Transverse colon (tissue), 4 donors: ENCODE measurements at regions of chr12 and their contacts with region 1.

Region 1: GRCh38 chr12:92570056-92570753 is 132.6 kb upstream of the PLEKHG7 start:
- DNase-seq: peak; percentile 64
- H3K4me3 ChIP-seq: no peak overlapping the region
- H3K27ac ChIP-seq: no peak overlapping the region
- H3K4me1 ChIP-seq: peaks cover 0 to 20% (median 5%) of the 10 kb centered on the region in 4 donors
- H3K27me3 ChIP-seq: no peaks in the 10 kb centered on the region
- CTCF ChIP-seq: peak; percentile 76 to 94 (median 81)
- EP300 ChIP-seq: no peak
- POLR2A ChIP-seq: no peak

Region 2: DNA sequence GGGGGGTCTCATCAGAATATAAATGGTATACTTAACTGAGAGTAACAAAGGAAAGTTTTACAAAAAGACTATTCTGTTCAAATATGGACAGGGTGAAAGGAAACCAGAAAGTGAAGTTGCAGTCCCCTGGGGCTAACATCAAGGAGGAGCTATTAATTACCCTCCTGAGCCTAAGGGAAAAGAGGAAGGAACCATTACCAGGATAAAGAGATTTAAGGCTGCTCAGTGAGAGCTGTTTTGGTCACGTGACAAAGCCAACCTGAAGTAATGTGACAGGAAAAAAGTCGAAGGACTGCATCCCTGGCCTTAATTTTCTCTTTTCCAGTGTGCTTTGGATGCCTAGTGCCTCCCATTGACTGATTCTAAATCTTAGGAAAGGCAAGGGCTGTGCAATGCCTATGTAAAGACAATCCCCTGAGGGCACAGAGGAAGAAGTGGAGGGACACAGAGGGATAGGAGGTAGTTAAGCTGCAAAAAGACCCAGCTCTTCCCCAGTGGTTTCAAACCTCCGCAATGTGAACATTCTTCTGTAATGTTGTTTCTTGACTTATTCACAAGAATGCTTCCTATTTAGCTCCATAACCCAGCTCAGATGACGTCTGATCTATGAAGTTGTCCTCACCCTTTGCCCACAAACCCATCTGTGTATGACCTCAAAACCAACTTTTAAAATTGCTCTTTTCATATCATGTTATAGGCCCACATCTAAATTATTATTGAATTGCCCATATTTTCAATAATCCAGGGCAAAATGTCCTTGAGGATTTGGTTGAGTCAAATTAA is 1199.9 kb before region 1 on chr12:
- in situ Hi-C with region 1: loop called in 1 of 4 experiments (anchors 10 kb)
- intact Hi-C with region 1: no loop called
- DNase-seq: no peak
- H3K4me3 ChIP-seq: no peak overlapping the region
- H3K27ac ChIP-seq: no peak overlapping the region
- H3K4me1 ChIP-seq: no peaks in the 10 kb centered on the region
- H3K27me3 ChIP-seq: no peaks in the 10 kb centered on the region
- CTCF ChIP-seq: no peak
- EP300 ChIP-seq: no peak
- POLR2A ChIP-seq: no peak

Region 3: DNA sequence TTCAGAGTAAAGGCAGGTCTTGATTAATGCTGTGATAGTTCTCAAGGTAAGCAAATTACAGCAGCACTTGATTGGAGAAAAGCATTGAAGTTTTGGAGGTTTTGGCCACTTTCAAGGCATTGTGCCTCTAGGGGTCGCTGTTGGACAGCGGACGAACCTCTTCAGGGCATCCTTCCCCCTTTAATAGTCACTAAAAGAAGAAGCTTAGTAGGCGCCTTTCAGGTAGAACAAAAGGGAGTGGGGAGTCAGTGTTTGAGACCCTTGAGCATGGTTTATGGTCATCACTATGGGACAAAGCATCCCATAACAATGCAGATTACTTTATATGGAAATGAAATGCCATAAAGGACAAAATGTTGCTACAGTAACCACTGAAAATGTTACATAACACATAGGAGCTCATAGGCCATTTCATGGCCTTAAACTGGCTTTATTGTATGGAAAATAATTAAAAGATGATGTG is 1188.1 kb before region 1 on chr12:
- in situ Hi-C with region 1: loop called in 3 of 4 experiments (anchors 5 to 10 kb)
- intact Hi-C with region 1: loop called (anchors 5 kb)
- DNase-seq: peak; percentile 86
- H3K4me3 ChIP-seq: peak overlapping the region; percentile 7 to 40 (median 22)
- H3K27ac ChIP-seq: peak overlapping the region; percentile 53 to 71 (median 60)
- H3K4me1 ChIP-seq: peaks cover 0 to 27% (median 1%) of the 10 kb centered on the region in 4 donors
- H3K27me3 ChIP-seq: no peaks in the 10 kb centered on the region
- CTCF ChIP-seq: peak; percentile 83 to 94 (median 87)
- EP300 ChIP-seq: no peak
- POLR2A ChIP-seq: no peak

Region 4: DNA sequence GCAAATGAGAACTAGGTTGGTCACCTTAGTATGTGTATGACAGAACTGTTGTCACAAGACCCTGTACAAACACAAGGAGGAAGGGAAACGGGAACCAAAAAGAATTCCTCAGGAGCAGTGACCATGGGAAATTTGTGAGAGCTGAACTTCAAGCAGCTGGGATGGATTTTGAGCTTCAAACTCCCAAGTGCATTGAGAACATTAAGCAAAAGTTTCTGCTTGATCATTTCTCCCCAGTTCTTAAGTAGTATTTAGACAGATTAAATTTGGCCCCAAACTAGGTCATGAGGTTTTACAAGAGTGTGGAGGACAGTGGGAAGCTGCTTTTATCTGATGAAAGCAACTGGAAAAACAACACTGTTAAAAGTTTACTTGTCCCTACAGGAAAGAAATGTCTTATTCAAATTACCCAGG is 1181.6 kb before region 1 on chr12:
- in situ Hi-C with region 1: loop called in 2 of 4 experiments (anchors 5 to 10 kb)
- intact Hi-C with region 1: loop called (anchors 5 kb)
- DNase-seq: no peak
- H3K4me3 ChIP-seq: no peak overlapping the region
- H3K27ac ChIP-seq: no peak overlapping the region
- H3K4me1 ChIP-seq: peaks cover 0 to 7% (median 0%) of the 10 kb centered on the region in 4 donors
- H3K27me3 ChIP-seq: no peaks in the 10 kb centered on the region
- CTCF ChIP-seq: no peak
- EP300 ChIP-seq: no peak
- POLR2A ChIP-seq: no peak

Region 5: GRCh38 chr12:92145731-92146496 is 424.3 kb before region 1 on chr12 and contains the start of gene BTG1:
- in situ Hi-C with region 1: loop called (anchors 5 to 25 kb)
- intact Hi-C with region 1: loop called (anchors 10 kb)
- DNase-seq: peak; percentile 100
- H3K4me3 ChIP-seq: peak within 1 kb of the TSS; percentile 74 to 98 (median 96)
- H3K27ac ChIP-seq: peak within 1 kb of the TSS; percentile 98 to 100 (median 99)
- H3K4me1 ChIP-seq: peaks cover 0 to 30% (median 2%) of the 10 kb centered on the region in 4 donors
- H3K27me3 ChIP-seq: no peaks in the 10 kb centered on the region
- CTCF ChIP-seq: no peak
- EP300 ChIP-seq: no peak
- POLR2A ChIP-seq: peak; percentile 99
- total RNA-seq, gene BTG1: 28.3 to 111 (median 78.1) TPM

Region 6: DNA sequence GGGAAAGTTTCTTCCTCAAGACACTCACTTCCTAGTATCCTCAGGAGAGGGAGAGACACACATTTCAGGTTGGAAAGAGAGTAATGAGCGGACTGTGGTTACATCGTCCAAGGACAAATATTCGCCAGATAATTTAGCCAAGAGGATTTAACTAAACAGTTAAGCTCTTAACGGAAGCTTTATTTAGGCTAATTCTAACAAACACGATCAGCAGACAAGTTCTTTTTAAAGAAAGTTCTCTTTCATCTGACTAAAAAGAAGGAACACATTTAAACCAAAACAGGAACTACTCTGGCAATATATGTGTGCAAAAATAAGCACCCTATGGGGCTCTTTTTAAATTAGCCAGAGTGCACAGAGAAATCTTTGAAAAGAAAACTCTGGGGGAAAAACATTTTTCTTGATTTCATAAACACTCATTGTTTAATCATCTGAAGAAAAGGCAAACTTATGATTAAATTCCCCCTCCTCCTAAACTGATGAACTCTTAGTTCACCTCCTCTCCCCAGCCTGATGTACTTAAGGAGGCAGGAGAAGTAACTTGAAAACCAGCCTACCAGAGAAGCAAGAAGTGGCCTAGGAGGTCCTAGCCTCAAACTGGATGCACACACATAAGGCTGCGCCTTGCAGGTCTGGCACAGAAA is 411.3 kb before region 1 on chr12:
- in situ Hi-C with region 1: no loop called
- intact Hi-C with region 1: loop called (anchors 10 kb)
- DNase-seq: no peak
- H3K4me3 ChIP-seq: no peak overlapping the region
- H3K27ac ChIP-seq: peak overlapping the region in 1 of 4 donors; percentile 40
- H3K4me1 ChIP-seq: peaks cover 0 to 14% (median 2%) of the 10 kb centered on the region in 4 donors
- H3K27me3 ChIP-seq: no peaks in the 10 kb centered on the region
- CTCF ChIP-seq: no peak
- EP300 ChIP-seq: no peak
- POLR2A ChIP-seq: no peak